Ascending aorta (tissue), 2 donors: ENCODE measurements at regions of chrX and their contacts with region 1.

Region 1: DNA sequence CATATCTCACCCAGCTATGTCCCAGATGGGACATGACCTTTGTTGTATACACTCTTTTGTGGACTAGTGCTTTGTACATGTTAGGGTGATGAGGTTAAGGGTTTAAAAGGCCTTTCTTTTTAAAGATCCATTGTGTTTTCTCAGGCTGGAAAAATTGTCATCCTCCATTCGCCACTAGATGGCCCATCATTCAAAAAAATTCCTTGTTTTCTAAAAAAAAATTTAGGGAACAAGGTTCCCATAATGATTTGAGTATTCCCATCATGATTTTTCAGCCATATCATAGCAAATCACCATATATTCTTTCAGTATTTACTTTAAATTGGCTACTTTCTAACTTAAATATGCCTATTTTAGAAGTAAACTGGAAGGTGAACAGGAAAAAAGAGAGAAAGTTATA is 91.9 kb upstream of the TMEM164 start:
- DNase-seq: no peak
- H3K4me3 ChIP-seq: no peak overlapping the region
- H3K27ac ChIP-seq: no peak overlapping the region
- H3K4me1 ChIP-seq: no peaks in the 10 kb centered on the region
- H3K27me3 ChIP-seq: no peaks in the 10 kb centered on the region
- CTCF ChIP-seq: peak in 2 of 3 experiments; percentile 35 to 48

Region 2: DNA sequence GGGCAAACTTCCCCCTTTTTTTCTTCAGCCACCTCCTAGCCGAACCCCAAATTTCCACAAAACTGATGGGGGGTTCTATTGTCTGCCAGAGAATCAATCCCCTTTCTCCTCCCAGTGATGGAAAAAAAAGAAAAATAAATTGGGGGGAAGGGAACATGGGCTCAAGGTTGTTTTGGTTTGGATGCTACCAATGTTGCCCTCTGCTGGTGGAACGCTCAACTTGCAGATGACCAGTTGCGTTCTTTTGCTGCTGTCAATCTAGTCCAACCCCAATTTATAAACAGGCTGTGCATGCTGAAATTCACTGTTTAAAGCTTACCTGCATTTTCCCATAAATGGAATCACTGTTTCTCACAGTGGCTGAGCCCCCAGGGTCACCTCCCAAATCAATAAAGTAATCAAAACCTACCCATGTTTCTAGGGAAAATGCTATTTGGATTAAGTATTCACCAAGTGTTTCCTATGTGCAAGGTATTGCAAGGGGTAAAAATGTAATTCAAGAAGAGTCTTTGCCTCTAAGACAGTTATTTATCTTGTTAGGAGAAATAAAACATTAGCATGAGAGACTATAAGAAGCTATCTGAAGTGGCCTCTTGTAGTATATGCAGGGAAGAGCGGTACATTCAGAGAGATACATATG is 24.8 kb before region 1 on chrX:
- intact Hi-C with region 1: no loop called
- DNase-seq: no peak
- H3K4me3 ChIP-seq: no peak overlapping the region
- H3K27ac ChIP-seq: no peak overlapping the region
- H3K4me1 ChIP-seq: no peaks in the 10 kb centered on the region
- H3K27me3 ChIP-seq: no peaks in the 10 kb centered on the region
- CTCF ChIP-seq: peak in 2 of 3 experiments; percentile 38 to 62

Region 3: GRCh38 chrX:110146521-110146920 is 235.5 kb after region 1 on chrX:
- intact Hi-C with region 1: loop called (anchors 2 kb)
- DNase-seq: no peak
- H3K4me3 ChIP-seq: no peak overlapping the region
- H3K27ac ChIP-seq: peak overlapping the region in 1 of 2 donors; percentile 20
- H3K4me1 ChIP-seq: peaks cover 0 to 6% of the 10 kb centered on the region in 2 donors
- H3K27me3 ChIP-seq: no peaks in the 10 kb centered on the region
- CTCF ChIP-seq: peak; percentile 44 to 75 (median 62)

Region 4: DNA sequence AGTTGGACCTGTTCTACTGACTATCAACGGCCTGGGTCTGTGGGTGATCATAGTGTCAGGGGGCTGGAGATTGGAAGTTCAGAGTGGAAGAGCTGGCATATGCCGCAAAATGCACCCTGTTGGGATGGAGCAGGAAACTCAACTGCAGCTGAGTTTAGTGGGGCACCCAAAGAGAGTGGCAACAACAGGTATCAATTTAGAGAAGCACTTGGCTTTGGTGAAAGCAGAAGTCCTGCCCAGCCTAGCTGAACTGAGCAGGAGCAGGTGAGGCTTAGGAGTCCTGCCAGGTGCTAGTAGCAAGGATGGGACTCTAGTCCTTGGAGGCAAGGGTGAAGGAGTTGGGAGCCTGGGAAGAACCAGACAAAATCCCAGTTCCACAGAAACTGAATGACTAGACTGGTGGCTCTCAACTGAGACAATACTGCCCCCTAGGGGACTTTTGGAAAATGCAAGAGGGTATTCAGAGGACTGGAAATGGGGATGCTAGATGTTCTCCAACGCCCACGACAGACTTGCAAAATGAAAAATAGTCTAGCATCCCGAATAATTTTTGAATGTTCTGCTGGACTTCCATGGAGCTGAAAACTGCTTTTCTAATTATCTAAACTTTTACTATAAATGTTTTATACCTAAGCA is 497.0 kb after region 1 on chrX:
- intact Hi-C with region 1: loop called (anchors 10 kb)
- DNase-seq: no peak
- H3K4me3 ChIP-seq: no peak overlapping the region
- H3K27ac ChIP-seq: no peak overlapping the region
- H3K4me1 ChIP-seq: no peaks in the 10 kb centered on the region
- H3K27me3 ChIP-seq: no peaks in the 10 kb centered on the region
- CTCF ChIP-seq: peak; percentile 46 to 69 (median 63)